GM12878 (cell line): ENCODE measurements at regions of chr16 and their contacts with region 1.

Region 1: GRCh38 chr16:3129137-3130131 is 5.4 kb upstream of the ZNF213 start:
- DNase-seq: no peak
- ATAC-seq: peak; percentile 83
- H3K4me3 ChIP-seq: peak overlapping the region; percentile 70
- H3K27ac ChIP-seq: peak overlapping the region; percentile 69
- H3K4me1 ChIP-seq: peaks cover 10% of the 10 kb centered on the region
- H3K27me3 ChIP-seq: no peaks in the 10 kb centered on the region
- CTCF ChIP-seq: peak; percentile 91 to 95 (median 94)
- EP300 ChIP-seq: no peak
- POLR2A ChIP-seq: peak; percentile 72
- RAD21 ChIP-seq: peak; percentile 83

Region 2: GRCh38 chr16:1983544-1984346 is 1145.7 kb before region 1 on chr16 and contains the start of gene GFER:
- CTCF ChIA-PET with region 1: no interaction called
- POLR2A ChIA-PET with region 1: no interaction called
- RAD21 ChIA-PET with region 1: no interaction called
- SMC1A ChIA-PET with region 1: no interaction called
- in situ Hi-C with region 1: no loop called
- intact Hi-C with region 1: no loop called
- DNase-seq: peak; percentile 43
- ATAC-seq: peak; percentile 91
- H3K4me3 ChIP-seq: peak within 1 kb of the TSS; percentile 87
- H3K27ac ChIP-seq: no peak within 1 kb of the TSS
- H3K4me1 ChIP-seq: peaks cover 28% of the 10 kb centered on the region
- H3K27me3 ChIP-seq: 0 out of 4 replicates have a peak, but pooled peaks cover 0 to 5% of the 10 kb centered on the region in 2 experiments
- CTCF ChIP-seq: peak in 2 of 3 experiments; percentile 48 to 53; a peak in 3 of 6 replicates
- EP300 ChIP-seq: no peak
- POLR2A ChIP-seq: peak; percentile 87
- RAD21 ChIP-seq: no peak
- polyA plus RNA-seq, gene GFER: 2.4 to 9.2 TPM

Region 3: GRCh38 chr16:3003582-3004302 is 125.7 kb before region 1 on chr16:
- CTCF ChIA-PET with region 1: interaction called, 17 read pairs
- POLR2A ChIA-PET with region 1: no interaction called
- RAD21 ChIA-PET with region 1: no interaction called
- SMC1A ChIA-PET with region 1: interaction called, 3 read pairs
- in situ Hi-C with region 1: no loop called
- intact Hi-C with region 1: no loop called
- DNase-seq: peak; percentile 97
- ATAC-seq: peak; percentile 100
- H3K4me3 ChIP-seq: no peak overlapping the region
- H3K27ac ChIP-seq: no peak overlapping the region
- H3K4me1 ChIP-seq: peaks cover 17% of the 10 kb centered on the region
- H3K27me3 ChIP-seq: peaks cover 0 to 7% of the 10 kb centered on the region in 2 experiments; a peak in 3 of 4 replicates
- CTCF ChIP-seq: peak; percentile 56 to 75 (median 64)
- EP300 ChIP-seq: no peak
- POLR2A ChIP-seq: no peak
- RAD21 ChIP-seq: peak; percentile 71

Region 4: DNA sequence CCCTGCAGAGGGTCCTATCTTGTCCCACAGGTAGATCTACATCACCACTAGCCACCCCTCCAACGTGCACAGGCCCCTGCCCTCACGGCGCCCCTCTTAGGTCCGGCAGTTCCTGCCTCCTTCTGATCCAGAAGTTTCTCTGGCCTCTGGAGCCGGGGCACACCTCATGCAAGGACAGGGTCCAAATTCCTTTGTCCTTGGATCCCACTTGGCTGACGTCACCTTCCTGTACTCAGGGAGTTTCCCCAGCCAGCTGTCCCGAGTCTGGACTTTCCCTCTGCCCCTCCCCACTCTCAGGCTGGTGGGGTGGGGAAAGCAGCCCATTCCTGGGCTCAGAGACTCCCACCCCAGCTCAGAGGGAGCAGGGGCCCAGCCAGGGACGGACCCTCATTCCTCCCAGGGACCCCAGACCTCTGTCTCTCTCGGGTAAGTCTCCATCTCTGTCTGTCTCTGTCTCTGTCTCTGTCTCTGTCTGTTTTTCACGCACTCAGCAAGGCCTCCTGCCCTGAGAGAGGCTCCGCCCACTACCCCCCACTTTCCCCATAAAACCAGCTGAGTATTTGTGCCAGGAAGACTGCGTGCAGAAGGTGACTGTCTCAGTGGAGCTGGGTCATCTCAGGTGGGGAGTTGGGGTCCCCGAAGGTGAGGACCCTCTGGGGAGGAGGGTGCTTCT is 64.2 kb before region 1 on chr16 and contains the start of gene IL32:
- CTCF ChIA-PET with region 1: interaction called, 174 read pairs
- POLR2A ChIA-PET with region 1: interaction called, 12 read pairs
- RAD21 ChIA-PET with region 1: interaction called, 72 read pairs
- SMC1A ChIA-PET with region 1: interaction called, 53 read pairs
- in situ Hi-C with region 1: loop called (anchors 5 kb)
- intact Hi-C with region 1: no loop called
- DNase-seq: no peak
- ATAC-seq: peak; percentile 75
- H3K4me3 ChIP-seq: peak within 1 kb of the TSS; percentile 62
- H3K27ac ChIP-seq: peak within 1 kb of the TSS; percentile 86
- H3K4me1 ChIP-seq: peaks cover 19% of the 10 kb centered on the region
- H3K27me3 ChIP-seq: no peaks in the 10 kb centered on the region
- CTCF ChIP-seq: no peak
- EP300 ChIP-seq: no peak
- POLR2A ChIP-seq: no peak
- RAD21 ChIP-seq: no peak
- polyA plus RNA-seq, gene IL32: 44.8 to 49.3 TPM

Region 5: GRCh38 chr16:3099732-3100499 is 29.5 kb before region 1 on chr16:
- CTCF ChIA-PET with region 1: interaction called, 396 read pairs
- POLR2A ChIA-PET with region 1: interaction called, 10 read pairs
- RAD21 ChIA-PET with region 1: interaction called, 55 read pairs
- SMC1A ChIA-PET with region 1: interaction called, 67 read pairs
- in situ Hi-C with region 1: no loop called
- intact Hi-C with region 1: loop called (anchors 2 kb)
- DNase-seq: no peak
- ATAC-seq: peak; percentile 92
- H3K4me3 ChIP-seq: peak overlapping the region; percentile 35; the same call in 1 of the 2 replicates
- H3K27ac ChIP-seq: no peak overlapping the region
- H3K4me1 ChIP-seq: peaks cover 29% of the 10 kb centered on the region
- H3K27me3 ChIP-seq: no peaks in the 10 kb centered on the region
- CTCF ChIP-seq: no peak
- EP300 ChIP-seq: no peak
- POLR2A ChIP-seq: peak; percentile 39; the same call in 1 of the 2 replicates
- RAD21 ChIP-seq: no peak

Region 6: GRCh38 chr16:3118204-3118806 is 11.1 kb before region 1 on chr16:
- CTCF ChIA-PET with region 1: interaction called, 41 read pairs
- POLR2A ChIA-PET with region 1: interaction called, 3 read pairs
- RAD21 ChIA-PET with region 1: interaction called, 3 read pairs
- SMC1A ChIA-PET with region 1: interaction called, 11 read pairs
- in situ Hi-C with region 1: no loop called
- intact Hi-C with region 1: no loop called
- DNase-seq: no peak
- ATAC-seq: no peak
- H3K4me3 ChIP-seq: no peak overlapping the region
- H3K27ac ChIP-seq: no peak overlapping the region
- H3K4me1 ChIP-seq: peaks cover 2% of the 10 kb centered on the region
- H3K27me3 ChIP-seq: no peaks in the 10 kb centered on the region
- CTCF ChIP-seq: no peak
- EP300 ChIP-seq: no peak
- POLR2A ChIP-seq: no peak
- RAD21 ChIP-seq: no peak

Region 7: DNA sequence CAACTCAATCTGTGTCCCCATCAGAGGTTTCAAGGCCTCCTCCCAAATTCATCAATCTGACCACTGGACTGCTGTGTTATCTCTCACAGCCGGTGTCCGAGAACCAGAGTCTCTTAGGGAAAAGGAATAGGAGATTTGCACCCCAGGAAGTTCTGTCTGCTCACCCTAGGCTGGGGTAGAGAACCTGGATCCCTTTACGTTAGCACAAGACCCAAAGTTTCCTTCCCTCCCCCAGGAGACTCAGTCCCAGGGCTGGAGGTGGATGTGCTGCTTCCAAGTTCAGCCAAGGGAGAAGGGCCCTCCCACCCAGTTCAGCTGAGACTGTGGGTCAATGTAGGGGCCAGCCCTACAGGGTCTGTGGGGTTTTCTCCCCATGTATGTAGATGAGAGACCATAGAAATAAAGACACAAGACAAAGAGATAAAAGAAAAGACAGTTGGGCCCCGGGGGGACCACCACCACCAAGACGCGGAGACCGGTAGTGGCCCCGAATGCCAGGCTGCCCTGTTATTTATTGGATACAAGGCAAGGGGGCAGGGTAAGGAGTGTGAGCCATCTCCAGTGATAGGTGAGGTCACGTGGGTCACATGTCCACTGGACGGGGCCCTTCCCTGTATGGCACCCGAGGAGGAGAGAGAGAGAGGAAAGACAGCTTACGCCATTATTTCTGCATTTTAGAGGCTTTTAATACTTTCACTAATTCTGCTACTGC is 35.8 kb after region 1 on chr16:
- CTCF ChIA-PET with region 1: interaction called, 56 read pairs
- POLR2A ChIA-PET with region 1: interaction called, 4 read pairs
- RAD21 ChIA-PET with region 1: interaction called, 11 read pairs
- SMC1A ChIA-PET with region 1: interaction called, 10 read pairs
- in situ Hi-C with region 1: no loop called
- intact Hi-C with region 1: no loop called
- DNase-seq: no peak
- ATAC-seq: peak; percentile 36
- H3K4me3 ChIP-seq: peak overlapping the region; percentile 25; the same call in 1 of the 2 replicates
- H3K27ac ChIP-seq: no peak overlapping the region
- H3K4me1 ChIP-seq: peaks cover 2% of the 10 kb centered on the region
- H3K27me3 ChIP-seq: no peaks in the 10 kb centered on the region; a peak in 1 of 4 replicates
- CTCF ChIP-seq: no peak
- EP300 ChIP-seq: no peak
- POLR2A ChIP-seq: no peak
- RAD21 ChIP-seq: no peak

Region 8: DNA sequence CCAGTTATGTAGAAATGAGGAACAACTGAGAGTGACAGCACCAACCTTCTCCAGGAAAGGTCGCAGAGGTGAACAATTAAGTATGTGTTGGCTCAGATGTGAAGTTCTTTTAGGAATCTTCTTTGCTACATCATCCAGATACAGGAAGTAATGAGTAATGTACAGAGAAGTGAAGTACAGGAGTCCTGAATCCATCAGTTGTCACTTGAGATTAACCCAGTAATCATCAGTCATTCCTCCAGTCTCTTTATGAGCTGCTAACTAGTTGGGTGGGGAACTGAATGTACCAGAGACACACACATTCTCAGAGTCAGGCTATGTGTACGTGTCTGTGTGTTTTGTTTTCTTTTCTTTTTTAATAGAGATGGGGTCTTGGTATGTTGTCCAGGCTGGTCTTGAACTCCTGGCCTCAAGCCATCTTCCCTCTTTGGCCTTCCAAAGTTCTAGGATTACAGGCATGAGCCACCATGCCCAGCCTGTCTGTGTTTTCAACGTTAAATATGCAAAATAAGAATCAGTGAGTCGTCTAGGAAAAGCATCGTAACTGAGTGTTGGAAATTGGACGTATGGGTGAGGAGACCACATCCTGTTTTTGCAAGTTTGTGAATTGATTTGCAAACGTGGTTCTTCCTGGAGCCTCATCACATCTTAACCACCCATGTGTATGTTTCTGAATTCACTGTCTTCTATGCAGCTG is 85.6 kb after region 1 on chr16:
- CTCF ChIA-PET with region 1: no interaction called
- POLR2A ChIA-PET with region 1: no interaction called
- RAD21 ChIA-PET with region 1: no interaction called
- SMC1A ChIA-PET with region 1: no interaction called
- in situ Hi-C with region 1: no loop called
- intact Hi-C with region 1: no loop called
- DNase-seq: no peak
- ATAC-seq: no peak
- H3K4me3 ChIP-seq: peak overlapping the region; percentile 24; the same call in 1 of the 2 replicates
- H3K27ac ChIP-seq: no peak overlapping the region
- H3K4me1 ChIP-seq: peaks cover 4% of the 10 kb centered on the region
- H3K27me3 ChIP-seq: no peaks in the 10 kb centered on the region
- CTCF ChIP-seq: no peak
- EP300 ChIP-seq: no peak
- POLR2A ChIP-seq: no peak
- RAD21 ChIP-seq: no peak

Region 9: GRCh38 chr16:3266873-3267537 is 137.6 kb after region 1 on chr16:
- CTCF ChIA-PET with region 1: no interaction called
- POLR2A ChIA-PET with region 1: no interaction called
- RAD21 ChIA-PET with region 1: no interaction called
- SMC1A ChIA-PET with region 1: no interaction called
- in situ Hi-C with region 1: no loop called
- intact Hi-C with region 1: no loop called
- DNase-seq: no peak
- ATAC-seq: no peak
- H3K4me3 ChIP-seq: no peak overlapping the region
- H3K27ac ChIP-seq: no peak overlapping the region
- H3K4me1 ChIP-seq: peaks cover 8% of the 10 kb centered on the region; the same call in 1 of the 2 replicates
- H3K27me3 ChIP-seq: no peaks in the 10 kb centered on the region
- CTCF ChIP-seq: peak; percentile 24 to 45 (median 38); a peak in 4 of 6 replicates
- EP300 ChIP-seq: no peak
- POLR2A ChIP-seq: no peak
- RAD21 ChIP-seq: peak; percentile 25; the same call in 1 of the 2 replicates